Tibial artery (tissue), 4 donors: ENCODE measurements at regions of chr2 and their contacts with region 1.

Region 1: GRCh38 chr2:226984750-226985582 is 149.1 kb downstream of the RHBDD1 start:
- DNase-seq: peak in 1 of 2 donors; percentile 58
- H3K4me3 ChIP-seq: no peak overlapping the region
- H3K27ac ChIP-seq: no peak overlapping the region
- H3K4me1 ChIP-seq: peaks cover 0 to 10% (median 5%) of the 10 kb centered on the region in 4 donors
- H3K27me3 ChIP-seq: no peaks in the 10 kb centered on the region
- CTCF ChIP-seq: peak; percentile 76 to 82

Region 2: DNA sequence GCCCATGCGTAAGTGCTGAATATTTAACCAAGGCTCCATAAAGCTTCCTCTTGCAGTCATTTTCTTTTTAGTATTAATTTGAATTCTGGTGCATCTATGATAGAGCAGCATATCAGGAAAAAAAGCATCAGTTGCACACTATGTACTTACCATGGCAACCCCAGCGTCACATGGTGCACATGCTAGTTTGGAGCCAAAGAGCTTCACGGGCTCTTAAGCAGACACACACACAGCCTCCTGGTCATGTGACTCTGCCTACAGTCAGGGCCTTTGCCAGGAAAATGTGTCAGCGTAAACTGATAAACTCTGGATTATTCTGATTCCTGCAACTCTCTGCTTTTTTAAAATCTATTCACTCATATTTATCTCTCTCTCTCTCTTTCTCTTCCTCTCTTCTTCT is 1555.2 kb before region 1 on chr2:
- intact Hi-C with region 1: no loop called
- DNase-seq: no peak
- H3K4me3 ChIP-seq: no peak overlapping the region
- H3K27ac ChIP-seq: no peak overlapping the region
- H3K4me1 ChIP-seq: no peaks in the 10 kb centered on the region
- H3K27me3 ChIP-seq: no peaks in the 10 kb centered on the region
- CTCF ChIP-seq: no peak

Region 3: DNA sequence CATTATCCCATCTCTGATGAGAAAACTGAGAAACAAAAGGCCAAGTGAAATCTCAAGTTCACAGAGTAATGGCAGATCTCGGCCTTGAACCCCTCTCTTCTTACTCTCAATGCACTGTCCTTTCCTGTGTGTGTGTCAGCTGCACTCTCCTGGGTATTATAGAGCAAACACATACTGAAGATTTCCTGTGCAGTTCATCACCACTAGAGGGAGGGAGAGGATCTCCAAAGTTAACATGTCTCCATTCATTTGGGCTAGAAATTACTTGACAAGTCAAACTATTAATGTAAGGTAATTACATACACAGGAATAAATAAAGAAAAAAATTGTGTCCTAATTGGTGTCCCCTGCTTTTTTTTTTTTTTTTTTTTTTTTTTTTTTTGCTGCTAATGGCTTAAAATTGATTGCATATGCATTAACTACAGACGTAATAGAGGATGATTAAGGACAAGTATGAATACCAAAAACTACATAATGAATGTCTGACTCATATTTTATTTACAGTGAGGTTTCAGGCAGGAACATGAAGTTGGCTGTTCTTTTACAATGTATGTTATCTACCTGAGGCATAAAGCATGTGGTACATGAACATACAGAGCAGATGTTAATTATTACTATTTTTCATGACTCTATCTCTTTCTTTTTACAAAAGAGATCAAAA is 1316.2 kb before region 1 on chr2:
- intact Hi-C with region 1: loop called (anchors 5 kb)
- DNase-seq: no peak
- H3K4me3 ChIP-seq: no peak overlapping the region
- H3K27ac ChIP-seq: no peak overlapping the region
- H3K4me1 ChIP-seq: no peaks in the 10 kb centered on the region
- H3K27me3 ChIP-seq: no peaks in the 10 kb centered on the region
- CTCF ChIP-seq: peak; percentile 54 to 57

Region 4: GRCh38 chr2:225889446-225889850 is 1095.5 kb before region 1 on chr2:
- intact Hi-C with region 1: loop called (anchors 10 kb)
- DNase-seq: no peak
- H3K4me3 ChIP-seq: no peak overlapping the region
- H3K27ac ChIP-seq: no peak overlapping the region
- H3K4me1 ChIP-seq: no peaks in the 10 kb centered on the region
- H3K27me3 ChIP-seq: no peaks in the 10 kb centered on the region
- CTCF ChIP-seq: peak; percentile 77 to 85

Region 5: GRCh38 chr2:226800941-226801784 is 183.8 kb before region 1 on chr2:
- intact Hi-C with region 1: loop called (anchors 2 kb)
- DNase-seq: peak; percentile 59 to 92
- H3K4me3 ChIP-seq: peak overlapping the region; percentile 85 to 92
- H3K27ac ChIP-seq: peak overlapping the region; percentile 88 to 97
- H3K4me1 ChIP-seq: peaks cover 0 to 47% (median 31%) of the 10 kb centered on the region in 4 donors
- H3K27me3 ChIP-seq: no peaks in the 10 kb centered on the region
- CTCF ChIP-seq: no peak

Region 6: DNA sequence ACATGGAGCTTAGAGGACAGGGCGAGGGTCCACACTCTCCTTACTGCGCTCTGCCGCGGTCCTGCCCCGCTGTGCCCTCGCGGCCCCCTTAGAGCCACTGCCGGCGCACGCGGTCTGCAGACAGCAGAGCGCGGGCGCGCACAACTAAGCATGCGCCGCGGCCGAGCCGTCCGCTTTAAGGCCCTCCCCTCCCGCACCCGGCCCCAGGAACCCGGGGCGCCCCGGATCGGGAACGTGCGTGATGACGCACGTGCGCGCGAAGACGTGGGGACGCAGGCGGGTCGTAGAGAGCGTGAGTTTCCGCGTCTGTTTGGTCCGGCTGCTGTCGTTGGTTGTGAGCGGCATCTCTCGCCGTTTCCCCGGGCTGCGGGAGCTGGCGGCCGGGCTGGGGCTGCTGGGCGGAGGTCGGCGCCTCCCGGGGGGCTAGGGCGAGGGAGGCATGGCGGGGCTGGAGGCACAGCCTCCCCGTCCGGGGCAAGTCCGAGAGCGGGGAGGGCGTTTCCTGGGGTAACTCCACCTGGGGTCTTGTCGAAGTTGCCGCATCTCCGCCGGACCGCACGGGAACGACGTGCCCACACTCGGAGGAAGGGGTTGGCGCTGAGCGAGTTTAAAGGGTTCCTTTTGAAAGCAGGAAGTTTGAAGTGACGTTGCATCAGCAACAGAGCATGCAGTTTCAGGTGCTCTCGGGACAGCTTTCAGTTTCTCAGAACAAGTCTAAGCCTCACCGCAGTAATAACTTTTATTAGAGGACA is 149.0 kb before region 1 on chr2 and contains the start of gene RHBDD1:
- intact Hi-C with region 1: loop called (anchors 10 kb)
- DNase-seq: peak; percentile 90 to 96
- H3K4me3 ChIP-seq: peak within 1 kb of the TSS; percentile 64 to 87
- H3K27ac ChIP-seq: peak within 1 kb of the TSS; percentile 89 to 97
- H3K4me1 ChIP-seq: peaks cover 0 to 24% (median 13%) of the 10 kb centered on the region in 4 donors
- H3K27me3 ChIP-seq: no peaks in the 10 kb centered on the region
- CTCF ChIP-seq: no peak